Body of pancreas (tissue), 4 donors: ENCODE measurements at regions of chr9 and their contacts with region 1.

Region 1: DNA sequence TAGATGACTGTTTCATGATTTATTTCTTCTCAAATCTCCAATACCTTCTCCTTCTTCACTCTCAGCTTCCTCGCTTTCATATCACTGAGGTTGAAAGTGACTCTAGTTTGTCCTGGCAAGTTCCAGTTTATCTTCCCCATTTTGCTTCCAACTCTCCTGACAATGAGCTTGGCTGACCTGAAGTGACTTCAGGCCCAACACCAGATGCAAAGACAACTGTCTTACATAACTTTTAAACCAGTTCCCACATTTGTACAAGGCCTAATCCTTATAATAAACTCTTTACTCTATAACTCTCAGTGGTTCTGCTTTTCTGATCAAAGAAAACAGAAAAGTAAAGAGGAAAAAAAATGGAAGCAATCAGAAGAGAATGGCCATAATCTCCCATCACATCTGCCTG is 22.0 kb downstream of the GNG10 start:
- DNase-seq: no peak
- ATAC-seq: no peak
- H3K4me3 ChIP-seq: no peak overlapping the region
- H3K27ac ChIP-seq: no peak overlapping the region
- H3K4me1 ChIP-seq: no peaks in the 10 kb centered on the region
- H3K27me3 ChIP-seq: no peaks in the 10 kb centered on the region
- CTCF ChIP-seq: no peak
- POLR2A ChIP-seq: no peak

Region 2: GRCh38 chr9:111597817-111598729 is 85.3 kb before region 1 on chr9:
- intact Hi-C with region 1: loop called (anchors 10 kb)
- DNase-seq: peak; percentile 73 to 79 (median 77)
- ATAC-seq: peak; percentile 59
- H3K4me3 ChIP-seq: peak overlapping the region; percentile 47 to 71
- H3K27ac ChIP-seq: peak overlapping the region; percentile 1 to 83 (median 80)
- H3K4me1 ChIP-seq: peaks cover 5% of the 10 kb centered on the region
- H3K27me3 ChIP-seq: no peaks in the 10 kb centered on the region
- CTCF ChIP-seq: peak; percentile 60 to 90 (median 74)
- POLR2A ChIP-seq: no peak